Dendritic cell treated with granulocyte-macrophage colony-stimulating factor and Interleukin-4, amounts not matched to agents 40 ng/mL and 50 ng/mL, for 4 days (primary cell): ENCODE measurements at regions of chr4 and their contacts with region 1.

Region 1: GRCh38 chr4:140756319-140757231 is at the start of gene TBC1D9:
- H3K4me3 Mint-ChIP-seq: peak within 1 kb of the TSS; percentile 84
- H3K27ac Mint-ChIP-seq: peak within 1 kb of the TSS; percentile 95
- H3K4me1 Mint-ChIP-seq: peaks cover 41% of the 10 kb centered on the region
- H3K27me3 Mint-ChIP-seq: peaks cover 11% of the 10 kb centered on the region

Region 2: DNA sequence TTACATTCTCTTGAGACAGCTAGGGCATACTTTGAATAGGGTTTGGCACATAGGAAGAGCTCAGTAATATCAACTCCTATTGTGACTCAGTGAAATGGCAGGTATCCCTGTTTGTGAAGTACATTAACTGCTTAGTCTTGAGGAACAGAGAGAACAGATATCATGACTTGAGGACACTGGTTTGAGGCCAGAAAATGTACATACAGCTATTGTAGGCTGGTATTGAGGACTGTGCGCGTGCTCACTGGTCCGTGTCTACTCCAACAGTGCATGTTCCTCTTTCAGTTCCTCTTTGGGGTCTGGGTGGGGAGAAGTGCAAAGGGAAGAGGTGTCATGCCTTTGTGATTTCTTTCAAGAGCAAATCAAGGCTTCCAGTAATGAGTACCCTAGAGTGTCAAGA is 34.2 kb after region 1 on chr4:
- intact Hi-C with region 1: loop called (anchors 1 kb)
- H3K4me3 Mint-ChIP-seq: no peak overlapping the region
- H3K27ac Mint-ChIP-seq: peak overlapping the region; percentile 92
- H3K4me1 Mint-ChIP-seq: peaks cover 58% of the 10 kb centered on the region
- H3K27me3 Mint-ChIP-seq: no peaks in the 10 kb centered on the region

Region 3: DNA sequence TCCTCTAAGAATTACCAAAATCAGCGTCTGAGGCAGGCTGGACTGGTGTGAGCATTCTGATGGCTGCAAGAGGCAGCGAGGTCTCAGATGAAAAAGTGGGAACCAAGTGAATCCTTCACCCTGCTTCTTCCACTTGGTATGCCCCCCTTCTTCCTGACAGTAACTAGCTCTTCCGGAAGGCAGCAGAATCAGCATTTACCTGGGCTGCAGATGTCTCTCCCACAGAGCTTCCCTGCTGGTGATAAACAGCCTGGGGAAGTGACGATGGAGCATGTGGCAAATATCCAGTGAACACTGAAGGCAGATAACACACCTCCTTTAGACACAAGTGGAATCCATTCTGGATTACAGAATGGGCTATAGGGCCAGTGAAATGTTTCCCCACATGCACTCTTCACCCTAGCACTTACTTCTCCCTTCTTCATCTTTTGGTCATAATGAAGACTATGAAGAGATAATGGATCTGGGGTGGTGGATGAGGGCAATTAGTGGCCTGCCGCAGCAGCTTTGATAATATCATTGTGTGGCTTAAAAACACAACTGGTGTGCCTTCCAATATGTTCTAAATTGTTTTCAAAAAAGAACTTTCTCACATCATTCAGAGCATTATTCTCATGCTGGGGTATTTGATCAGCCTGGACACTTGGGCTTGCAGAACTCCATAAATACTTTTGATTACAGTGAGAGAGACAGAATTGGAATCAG is 60.4 kb after region 1 on chr4:
- intact Hi-C with region 1: no loop called
- H3K4me3 Mint-ChIP-seq: no peak overlapping the region
- H3K27ac Mint-ChIP-seq: no peak overlapping the region
- H3K4me1 Mint-ChIP-seq: no peaks in the 10 kb centered on the region
- H3K27me3 Mint-ChIP-seq: peaks cover 8% of the 10 kb centered on the region

Region 4: GRCh38 chr4:140829825-140830224 is 73.2 kb after region 1 on chr4:
- intact Hi-C with region 1: loop called (anchors 10 kb)
- H3K4me3 Mint-ChIP-seq: no peak overlapping the region
- H3K27ac Mint-ChIP-seq: peak overlapping the region; percentile 12
- H3K4me1 Mint-ChIP-seq: peaks cover 36% of the 10 kb centered on the region
- H3K27me3 Mint-ChIP-seq: peaks cover 4% of the 10 kb centered on the region

Region 5: GRCh38 chr4:141560056-141560455 is 803.5 kb after region 1 on chr4:
- intact Hi-C with region 1: no loop called
- H3K4me3 Mint-ChIP-seq: no peak overlapping the region
- H3K27ac Mint-ChIP-seq: no peak overlapping the region
- H3K4me1 Mint-ChIP-seq: no peaks in the 10 kb centered on the region
- H3K27me3 Mint-ChIP-seq: no peaks in the 10 kb centered on the region